Prostate gland (tissue), 2 donors: ENCODE measurements at regions of chr10 and their contacts with region 1.

Region 1: GRCh38 chr10:96017191-96017687 is 26.1 kb upstream of the CCNJ start:
- DNase-seq: peak; percentile 25
- H3K4me3 ChIP-seq: no peak overlapping the region
- H3K27ac ChIP-seq: no peak overlapping the region
- H3K4me1 ChIP-seq: no peaks in the 10 kb centered on the region
- H3K27me3 ChIP-seq: no peaks in the 10 kb centered on the region
- CTCF ChIP-seq: peak; percentile 28 to 76 (median 54)
- POLR2A ChIP-seq: no peak

Region 2: DNA sequence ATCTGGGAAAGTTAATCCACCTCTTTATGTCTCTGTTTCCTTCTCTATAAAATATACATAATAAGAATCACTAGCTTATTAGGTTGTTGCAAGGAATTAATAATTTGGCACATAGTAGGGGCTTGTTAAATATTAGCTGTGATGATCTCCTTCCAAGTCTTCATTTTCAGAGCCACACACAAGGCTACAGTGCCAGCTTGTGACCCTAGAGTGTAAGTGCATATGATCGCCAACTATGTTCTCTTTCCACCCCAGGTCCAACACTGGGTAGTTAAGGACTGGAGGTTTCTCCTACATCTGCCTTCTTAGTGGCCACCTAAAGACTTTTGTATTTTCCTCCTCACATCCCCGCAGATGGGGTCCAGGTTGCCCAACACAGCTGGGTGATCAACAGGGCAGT is 841.1 kb before region 1 on chr10:
- intact Hi-C with region 1: no loop called
- DNase-seq: no peak
- H3K4me3 ChIP-seq: no peak overlapping the region
- H3K27ac ChIP-seq: no peak overlapping the region
- H3K4me1 ChIP-seq: no peaks in the 10 kb centered on the region
- H3K27me3 ChIP-seq: no peaks in the 10 kb centered on the region
- CTCF ChIP-seq: no peak
- POLR2A ChIP-seq: no peak

Region 3: GRCh38 chr10:95792874-95793285 is 224.4 kb before region 1 on chr10:
- intact Hi-C with region 1: no loop called
- DNase-seq: no peak
- H3K4me3 ChIP-seq: no peak overlapping the region
- H3K27ac ChIP-seq: peak overlapping the region in 1 of 2 donors; percentile 22
- H3K4me1 ChIP-seq: no peaks in the 10 kb centered on the region
- H3K27me3 ChIP-seq: no peaks in the 10 kb centered on the region
- CTCF ChIP-seq: no peak
- POLR2A ChIP-seq: no peak

Region 4: DNA sequence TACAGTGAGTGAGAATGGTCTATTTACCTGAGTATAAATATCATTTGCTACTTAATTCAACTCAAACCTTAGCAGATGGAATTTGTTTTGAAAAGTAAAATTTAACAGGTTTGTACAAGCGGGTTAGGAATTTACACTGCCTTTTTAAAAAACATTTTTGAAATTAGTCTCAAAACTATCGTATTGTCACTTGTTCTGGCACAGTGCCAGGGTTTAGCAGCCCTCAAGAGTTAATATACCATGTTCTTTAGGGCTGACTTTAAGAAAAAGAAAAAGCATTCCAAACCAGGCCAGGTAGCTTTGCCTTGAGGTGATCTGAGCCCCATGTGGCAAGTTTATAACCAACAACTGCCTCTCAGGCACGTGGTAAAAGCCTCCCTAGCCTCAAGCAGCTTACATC is 44.0 kb after region 1 on chr10:
- intact Hi-C with region 1: loop called (anchors 10 kb)
- DNase-seq: no peak
- H3K4me3 ChIP-seq: no peak overlapping the region
- H3K27ac ChIP-seq: no peak overlapping the region
- H3K4me1 ChIP-seq: no peaks in the 10 kb centered on the region
- H3K27me3 ChIP-seq: no peaks in the 10 kb centered on the region
- CTCF ChIP-seq: no peak
- POLR2A ChIP-seq: no peak

Region 5: DNA sequence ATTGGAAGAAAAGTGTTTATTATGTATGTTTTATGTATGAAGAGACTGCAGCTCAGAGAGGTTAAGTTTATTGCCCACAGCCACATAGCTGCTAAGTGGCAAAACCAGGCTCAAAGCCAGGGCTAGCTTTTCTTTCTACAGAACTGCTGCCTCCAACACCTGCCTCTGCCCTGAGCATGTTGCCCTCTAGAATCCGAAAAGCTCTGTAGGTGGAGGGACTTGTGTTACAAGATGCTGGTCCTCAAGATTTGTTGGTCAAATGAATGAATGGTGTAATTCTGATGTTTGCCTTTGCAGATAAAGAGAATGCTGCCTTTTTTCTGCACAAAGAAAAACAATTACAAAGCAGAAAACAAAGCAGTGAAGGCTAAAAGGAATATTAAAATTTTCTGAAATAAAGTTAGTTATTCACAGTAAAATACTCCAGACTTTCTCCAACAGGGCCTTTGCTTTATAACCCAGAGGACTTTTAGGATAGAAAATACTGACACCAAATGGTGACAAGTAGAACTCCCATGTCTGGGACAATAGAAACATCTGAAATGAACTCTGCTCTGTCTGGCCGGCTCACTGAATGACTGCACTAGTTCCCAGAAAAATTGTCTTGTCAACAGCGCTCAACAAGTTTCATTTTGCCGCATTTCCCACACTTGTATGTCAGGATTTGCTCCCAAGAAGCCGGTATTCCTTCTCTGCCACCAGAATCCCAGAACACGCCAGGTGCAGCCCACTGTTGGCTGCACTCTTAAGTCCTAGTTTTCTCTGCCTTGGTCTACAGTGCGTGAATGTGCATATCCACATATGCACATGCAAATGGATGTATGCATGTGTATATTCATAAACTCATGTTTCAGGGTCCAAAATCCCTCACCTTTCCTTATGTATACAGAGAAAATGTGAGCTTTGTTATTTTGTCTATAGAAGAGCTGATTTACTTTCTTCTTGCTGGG is 276.0 kb after region 1 on chr10:
- intact Hi-C with region 1: loop called (anchors 10 kb)
- DNase-seq: peak; percentile 15
- H3K4me3 ChIP-seq: no peak overlapping the region
- H3K27ac ChIP-seq: no peak overlapping the region
- H3K4me1 ChIP-seq: no peaks in the 10 kb centered on the region
- H3K27me3 ChIP-seq: no peaks in the 10 kb centered on the region
- CTCF ChIP-seq: peak in 3 of 4 experiments; percentile 40 to 78 (median 78)
- POLR2A ChIP-seq: no peak